Lower leg skin (tissue), 4 donors: ENCODE measurements at regions of chr1 and their contacts with region 1.

Region 1: DNA sequence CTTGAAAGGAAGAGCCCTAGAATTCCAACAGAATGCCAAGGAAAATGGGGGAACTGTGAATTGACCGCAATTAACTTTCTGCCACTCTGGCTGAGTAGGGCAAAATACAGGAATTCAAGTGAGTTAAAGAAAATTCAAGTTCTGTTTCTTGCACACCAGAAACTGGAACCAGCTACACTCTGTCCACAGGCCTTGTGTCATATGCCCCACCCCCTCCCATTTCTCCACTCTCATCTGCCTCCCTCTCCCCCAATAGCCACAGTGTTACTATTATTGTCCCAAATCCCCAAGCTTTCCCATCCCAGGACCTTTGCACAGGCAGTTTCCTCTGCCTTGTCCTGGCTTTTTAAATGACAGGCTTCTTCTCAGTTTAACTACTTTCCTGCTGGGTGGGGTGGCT is 4.3 kb upstream of the STK40 start:
- DNase-seq: no peak
- H3K4me3 ChIP-seq: no peak overlapping the region
- CTCF ChIP-seq: no peak
- POLR2A ChIP-seq: no peak

Region 2: DNA sequence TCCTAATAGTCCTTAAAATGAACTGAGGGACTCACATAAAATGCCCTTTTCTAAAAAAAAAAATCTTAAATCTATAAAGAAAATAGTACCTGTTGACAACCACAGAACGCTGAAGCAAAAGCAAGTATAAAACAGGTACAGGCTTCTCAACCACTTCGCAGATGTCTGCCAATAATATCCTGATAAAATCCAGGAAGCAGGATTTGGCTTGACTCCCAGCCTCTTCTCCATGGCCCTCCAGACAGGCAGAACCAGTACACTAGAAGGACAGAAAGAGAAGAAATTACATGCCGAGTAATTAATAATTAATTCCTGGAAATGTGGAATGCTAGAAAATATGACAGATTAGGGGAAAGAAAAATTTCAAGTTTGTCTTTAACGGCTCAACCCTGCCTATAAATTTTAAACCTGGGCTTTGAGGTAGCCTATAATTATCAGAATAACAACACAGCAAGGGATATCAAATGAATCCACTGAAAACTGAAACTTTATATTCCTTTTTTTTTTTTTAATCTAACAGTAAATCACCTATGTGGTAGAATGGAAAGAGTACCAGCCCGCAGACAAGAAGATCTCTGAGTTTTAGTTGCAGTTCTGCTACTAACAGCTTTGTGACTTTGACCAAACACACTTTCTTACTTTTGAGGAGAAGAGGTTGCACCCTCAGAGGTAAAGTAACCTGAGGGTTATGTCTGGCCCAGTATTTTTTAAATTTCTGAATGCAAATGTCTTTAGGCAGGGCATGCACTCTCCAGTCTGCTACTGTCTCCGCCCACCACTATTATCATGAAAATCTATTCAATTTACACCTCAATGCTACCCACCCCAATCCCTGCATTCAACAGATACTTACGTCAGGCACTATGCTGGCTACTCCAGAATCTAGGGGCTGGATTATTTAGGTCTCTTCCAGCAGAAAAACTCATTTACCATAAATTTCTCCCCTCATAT is 835.5 kb before region 1 on chr1:
- intact Hi-C with region 1: loop called (anchors 5 kb)
- DNase-seq: no peak
- H3K4me3 ChIP-seq: no peak overlapping the region
- CTCF ChIP-seq: no peak
- POLR2A ChIP-seq: no peak

Region 3: GRCh38 chr1:36557041-36558000 is 167.3 kb after region 1 on chr1:
- intact Hi-C with region 1: no loop called
- DNase-seq: peak in 1 of 2 donors; percentile 45
- H3K4me3 ChIP-seq: no peak overlapping the region
- CTCF ChIP-seq: no peak
- POLR2A ChIP-seq: no peak